Aorta (tissue), 5 donors: ENCODE measurements at regions of chr19 and their contacts with region 1.

Region 1: DNA sequence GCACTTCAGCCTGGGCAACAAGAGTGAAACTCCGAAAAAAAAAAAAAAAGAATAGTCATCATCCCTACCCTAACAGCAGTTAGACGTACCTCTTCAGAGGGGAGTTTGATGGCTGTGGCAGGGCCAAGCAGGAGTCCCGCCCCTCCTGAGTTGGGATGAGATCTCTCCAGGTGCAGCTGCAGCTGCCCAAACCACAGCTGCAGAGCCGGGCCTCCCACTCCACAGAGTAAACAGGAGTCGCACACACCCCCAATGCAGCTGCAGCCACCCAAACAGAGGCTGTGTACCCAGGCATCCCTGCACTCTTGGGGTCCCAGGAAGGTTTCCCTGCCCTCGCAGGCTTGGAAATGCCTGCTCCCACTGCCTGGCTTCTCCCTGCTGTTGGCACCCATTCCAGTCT is 17.4 kb upstream of the MLLT1 start:
- DNase-seq: peak in 1 of 2 donors; percentile 66
- ATAC-seq: no peak
- H3K4me3 ChIP-seq: no peak overlapping the region
- H3K27ac ChIP-seq: no peak overlapping the region
- H3K4me1 ChIP-seq: no peaks in the 10 kb centered on the region
- H3K27me3 ChIP-seq: no peaks in the 10 kb centered on the region

Region 2: DNA sequence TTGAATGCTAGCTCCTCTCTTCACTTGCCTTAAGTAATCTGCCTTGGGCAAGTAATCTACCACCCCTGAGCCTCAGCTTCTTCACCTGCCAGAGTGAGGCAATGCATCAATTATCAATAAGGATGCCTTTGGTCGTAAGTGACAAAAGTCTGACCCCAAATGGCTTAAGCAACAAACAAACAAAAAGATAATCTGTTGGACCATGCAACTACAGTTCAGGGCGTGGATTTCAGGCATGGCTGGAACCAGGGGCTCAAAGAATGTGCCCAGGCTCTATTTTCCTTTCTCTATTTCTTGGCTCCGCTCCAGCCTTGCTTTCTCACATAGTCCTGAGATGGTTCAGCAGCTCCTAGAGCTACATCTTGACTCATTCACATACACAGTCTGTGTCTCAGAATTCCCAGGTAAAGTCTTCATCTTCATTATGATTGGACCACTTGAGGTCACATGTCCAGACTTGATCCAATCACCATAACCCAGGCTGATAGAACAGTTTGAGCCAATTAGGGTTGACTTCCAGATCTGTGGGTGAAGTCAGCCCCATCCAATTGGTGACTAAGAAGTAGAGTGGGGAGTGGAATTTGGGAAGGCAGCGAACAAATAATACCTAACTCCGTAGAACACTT is 132.2 kb before region 1 on chr19:
- intact Hi-C with region 1: loop called (anchors 5 kb)
- DNase-seq: no peak
- ATAC-seq: no peak
- H3K4me3 ChIP-seq: no peak overlapping the region
- H3K27ac ChIP-seq: no peak overlapping the region
- H3K4me1 ChIP-seq: no peaks in the 10 kb centered on the region
- H3K27me3 ChIP-seq: no peaks in the 10 kb centered on the region

Region 3: DNA sequence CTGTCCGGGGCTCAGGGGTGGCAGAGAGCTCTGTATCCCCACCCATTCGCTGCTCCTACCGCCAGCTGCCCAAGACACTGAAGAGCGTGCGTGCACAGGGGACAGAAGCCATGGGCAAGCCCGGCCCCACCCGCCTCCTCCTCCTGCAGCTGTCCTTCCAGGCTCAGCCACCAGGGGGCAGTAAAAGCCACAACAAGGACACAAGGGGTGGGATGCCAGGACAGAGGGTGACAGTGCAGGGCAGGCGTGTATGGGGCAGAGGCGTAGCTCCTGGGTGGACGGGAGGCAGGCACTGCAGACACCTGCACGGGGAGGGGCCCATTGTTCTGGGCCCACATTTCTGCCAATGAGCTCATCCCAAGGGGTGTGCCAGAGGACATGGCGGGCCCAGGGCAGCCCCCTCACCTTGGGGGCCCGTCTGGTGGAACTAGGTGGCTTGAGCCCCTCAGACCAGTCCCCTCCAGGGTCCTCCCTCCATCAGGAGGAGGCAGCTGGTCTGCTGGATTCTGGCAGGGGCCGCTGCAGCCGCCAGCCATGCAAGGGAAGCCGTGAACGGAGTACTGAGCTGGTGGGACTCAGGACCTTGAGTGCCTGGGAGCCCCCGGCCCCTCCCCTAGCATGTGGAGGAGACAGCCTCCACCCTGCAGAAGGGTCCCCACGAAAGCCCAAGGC is 78.6 kb before region 1 on chr19:
- intact Hi-C with region 1: loop called (anchors 1 to 5 kb)
- DNase-seq: peak; percentile 91 to 96
- ATAC-seq: peak; percentile 85
- H3K4me3 ChIP-seq: no peak overlapping the region
- H3K27ac ChIP-seq: no peak overlapping the region
- H3K4me1 ChIP-seq: no peaks in the 10 kb centered on the region
- H3K27me3 ChIP-seq: no peaks in the 10 kb centered on the region